ENCODE measurements at regions of chr1 and their contacts with region 1.

Region 1: GRCh38 chr1:100866041-100866900 is 28.4 kb downstream of the EXTL2 start:
- DNase-seq: no peak
- ATAC-seq: peak in 3 of 4 donors; percentile 55 to 69 (median 60)
- H3K4me3 ChIP-seq: peak overlapping the region in 4 of 12 donors; percentile 8 to 27 (median 11)
- H3K27ac ChIP-seq: no peak overlapping the region
- H3K4me1 ChIP-seq: peaks cover 0 to 10% (median 2%) of the 10 kb centered on the region in 12 donors
- H3K27me3 ChIP-seq: no peaks in the 10 kb centered on the region
- CTCF ChIP-seq: peak; percentile 46 to 78 (median 65)
- POLR2A ChIP-seq: no peak

Region 2: GRCh38 chr1:100606438-100606837 is 259.8 kb before region 1 on chr1:
- intact Hi-C with region 1: loop called (anchors 1 to 5 kb)
- DNase-seq: peak in 3 of 5 donors; percentile 28 to 39 (median 30)
- ATAC-seq: peak in 3 of 4 donors; percentile 64 to 83 (median 81)
- H3K4me3 ChIP-seq: no peak overlapping the region
- H3K27ac ChIP-seq: no peak overlapping the region
- H3K4me1 ChIP-seq: no peaks in the 10 kb centered on the region
- H3K27me3 ChIP-seq: no peaks in the 10 kb centered on the region
- CTCF ChIP-seq: peak; percentile 49 to 82 (median 67)
- POLR2A ChIP-seq: no peak

Region 3: DNA sequence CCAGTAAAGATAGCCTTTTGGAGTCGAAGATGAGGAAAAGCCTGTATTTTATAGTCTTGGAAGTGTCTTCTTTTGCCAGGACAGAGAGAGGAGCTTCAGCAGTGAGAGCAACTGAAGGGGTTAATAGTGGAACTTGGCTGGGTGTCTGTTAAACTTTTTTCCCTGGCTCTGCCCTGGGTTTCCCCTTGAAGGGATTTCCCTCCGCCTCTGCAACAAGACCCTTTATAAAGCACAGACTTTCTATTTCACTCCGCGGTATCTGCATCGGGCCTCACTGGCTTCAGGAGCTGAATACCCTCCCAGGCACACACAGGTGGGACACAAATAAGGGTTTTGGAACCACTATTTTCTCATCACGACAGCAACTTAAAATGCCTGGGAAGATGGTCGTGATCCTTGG is 146.8 kb before region 1 on chr1 and contains the start of gene VCAM1:
- intact Hi-C with region 1: loop called in 1 of 10 experiments (anchors 10 kb)
- DNase-seq: peak in 3 of 5 donors; percentile 17 to 25 (median 17)
- ATAC-seq: peak in 2 of 4 donors; percentile 46 to 67
- H3K4me3 ChIP-seq: peak within 1 kb of the TSS in 11 of 12 donors; percentile 3 to 57 (median 41)
- H3K27ac ChIP-seq: peak within 1 kb of the TSS in 8 of 12 donors; percentile 3 to 42 (median 32)
- H3K4me1 ChIP-seq: peaks cover 0 to 25% (median 2%) of the 10 kb centered on the region in 12 donors
- H3K27me3 ChIP-seq: no peaks in the 10 kb centered on the region
- CTCF ChIP-seq: no peak
- POLR2A ChIP-seq: no peak
- total RNA-seq, gene VCAM1: 1.3 to 40.7 (median 3.9) TPM

Region 4: GRCh38 chr1:100834777-100835660 is 31.3 kb before region 1 on chr1:
- intact Hi-C with region 1: loop called in 2 of 10 experiments (anchors 2 kb)
- DNase-seq: no peak
- ATAC-seq: no peak
- H3K4me3 ChIP-seq: no peak overlapping the region
- H3K27ac ChIP-seq: peak overlapping the region in 2 of 12 donors; percentile 51 to 61
- H3K4me1 ChIP-seq: peaks cover 0 to 20% (median 0%) of the 10 kb centered on the region in 12 donors
- H3K27me3 ChIP-seq: no peaks in the 10 kb centered on the region
- CTCF ChIP-seq: peak in 11 of 12 donors; percentile 10 to 47 (median 21)
- POLR2A ChIP-seq: no peak